Gastrocnemius medialis (tissue), 4 donors: ENCODE measurements at regions of chr3 and their contacts with region 1.

Region 1: DNA sequence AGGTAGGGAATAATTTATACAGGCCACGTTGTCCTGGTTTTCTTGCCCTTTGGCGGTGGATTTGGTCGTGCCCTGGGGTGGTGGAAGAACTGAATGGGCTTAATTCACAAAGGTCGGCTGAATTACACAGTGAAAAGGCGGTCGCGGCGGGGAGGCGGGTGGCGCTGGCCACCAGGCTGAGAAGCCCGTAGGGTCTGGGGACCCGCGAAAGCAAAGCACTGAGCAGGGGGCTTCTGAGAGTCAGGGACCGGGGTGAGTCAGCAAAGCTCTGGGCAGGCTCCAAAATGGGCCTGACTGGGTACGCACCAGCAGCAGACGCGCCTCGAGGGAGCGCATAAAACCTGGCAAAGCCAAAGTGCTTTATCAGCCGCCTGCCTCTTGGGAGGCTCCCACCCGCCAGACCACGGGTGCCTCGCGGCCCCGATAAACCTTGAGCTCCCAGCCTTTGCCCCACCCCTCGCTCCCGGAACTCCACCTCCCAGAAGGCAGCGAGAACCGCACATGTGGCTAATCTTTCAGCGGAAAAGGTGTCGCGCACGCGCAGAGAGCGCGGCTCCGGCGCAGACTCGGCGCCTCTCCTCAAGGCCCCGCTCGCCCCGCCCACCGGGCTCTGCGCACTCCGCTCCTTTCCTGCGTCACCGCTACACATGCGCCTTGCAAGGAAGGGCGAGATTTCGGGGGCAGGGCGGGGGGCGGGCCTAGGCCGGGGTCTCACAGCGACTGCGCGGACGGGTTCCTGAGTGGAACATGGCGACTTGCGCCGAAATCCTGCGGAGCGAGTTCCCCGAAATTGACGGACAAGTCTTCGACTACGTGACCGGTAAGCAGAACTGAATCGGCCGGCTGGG is at the start of gene ABCF3:
- DNase-seq: peak; percentile 99
- ATAC-seq: peak; percentile 92 to 97
- H3K4me3 ChIP-seq: peak within 1 kb of the TSS; percentile 78 to 97 (median 90)
- H3K27ac ChIP-seq: peak within 1 kb of the TSS; percentile 89 to 97 (median 96)
- H3K4me1 ChIP-seq: peaks cover 18 to 21% of the 10 kb centered on the region in 2 donors
- H3K27me3 ChIP-seq: no peaks in the 10 kb centered on the region
- CTCF ChIP-seq: no peak
- POLR2A ChIP-seq: peak; percentile 73 to 91
- total RNA-seq, gene ABCF3: 52.6 to 96.4 (median 63.2) TPM

Region 2: GRCh38 chr3:184145111-184145524 is 40.6 kb before region 1 on chr3:
- in situ Hi-C with region 1: no loop called
- intact Hi-C with region 1: loop called (anchors 2 kb)
- DNase-seq: peak; percentile 38 to 61
- ATAC-seq: peak; percentile 73 to 81
- H3K4me3 ChIP-seq: no peak overlapping the region
- H3K27ac ChIP-seq: peak overlapping the region; percentile 61 to 80 (median 72)
- H3K4me1 ChIP-seq: peaks cover 23 to 33% of the 10 kb centered on the region in 2 donors
- H3K27me3 ChIP-seq: no peaks in the 10 kb centered on the region
- CTCF ChIP-seq: peak in 4 of 5 experiments; percentile 35 to 59 (median 53)
- POLR2A ChIP-seq: no peak

Region 3: DNA sequence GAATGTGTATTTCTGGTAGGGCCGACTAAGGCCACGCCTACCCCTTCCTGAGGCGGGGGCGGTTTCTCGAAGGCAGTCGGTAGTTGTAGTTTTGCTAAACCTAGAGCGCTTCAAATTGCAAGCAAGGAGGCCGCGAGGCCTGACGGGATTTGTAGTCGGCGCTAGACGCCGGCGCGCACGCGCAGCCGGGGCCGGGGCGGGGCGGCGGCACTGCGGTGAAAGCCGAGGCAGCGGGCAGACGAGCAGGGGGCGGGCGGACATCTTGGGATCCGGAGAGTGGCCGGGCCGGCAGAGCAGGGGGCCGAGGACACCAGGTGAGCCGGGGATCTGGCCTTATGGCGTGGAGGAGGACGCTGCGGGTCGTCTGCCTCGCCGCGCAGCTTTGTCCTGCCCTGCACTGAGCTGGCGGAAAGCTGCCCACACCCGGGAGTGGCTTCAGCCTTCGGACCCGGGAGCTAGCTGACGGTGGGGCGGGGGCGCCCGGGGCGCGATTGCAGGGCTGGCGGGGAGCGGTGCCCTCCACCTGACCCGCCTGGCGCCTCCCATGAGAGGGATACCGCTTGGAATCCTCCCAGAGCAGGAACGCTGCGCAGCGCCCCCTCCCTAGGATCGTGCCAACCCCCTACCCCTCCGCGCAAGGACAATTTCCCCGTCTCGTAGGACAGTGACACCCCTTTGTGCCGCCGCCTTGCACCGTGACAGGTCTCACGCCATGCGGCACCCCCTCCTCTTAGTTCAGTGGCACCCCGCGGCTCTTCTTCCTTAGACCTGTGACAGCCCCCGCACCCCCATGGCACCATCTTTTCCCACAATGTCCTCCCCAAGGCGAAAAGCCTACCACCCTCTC is 10.8 kb before region 1 on chr3 and contains the start of gene AP2M1:
- in situ Hi-C with region 1: no loop called
- intact Hi-C with region 1: loop called (anchors 1 kb)
- DNase-seq: peak; percentile 98 to 100
- ATAC-seq: peak; percentile 94 to 96
- H3K4me3 ChIP-seq: peak within 1 kb of the TSS; percentile 95 to 98 (median 96)
- H3K27ac ChIP-seq: peak within 1 kb of the TSS; percentile 97 to 99 (median 98)
- H3K4me1 ChIP-seq: peaks cover 29 to 39% of the 10 kb centered on the region in 2 donors
- H3K27me3 ChIP-seq: no peaks in the 10 kb centered on the region
- CTCF ChIP-seq: peak in 1 of 5 experiments; percentile 14
- POLR2A ChIP-seq: peak; percentile 88 to 90
- total RNA-seq, gene AP2M1: 110 to 132 (median 117) TPM